ENCODE measurements at regions of chr18 and their contacts with region 1.

Region 1: GRCh38 chr18:48942554-48943261 is 8.1 kb downstream of the SMAD7 start:
- DNase-seq: peak; percentile 77 to 87
- H3K4me3 ChIP-seq: no peak overlapping the region
- H3K4me3 Mint-ChIP-seq: peak overlapping the region; percentile 37
- H3K27ac Mint-ChIP-seq: peak overlapping the region; percentile 69
- H3K4me1 ChIP-seq: peaks cover 69% of the 10 kb centered on the region
- H3K4me1 Mint-ChIP-seq: peaks cover 20% of the 10 kb centered on the region
- H3K27me3 ChIP-seq: no peaks in the 10 kb centered on the region
- H3K27me3 Mint-ChIP-seq: no peaks in the 10 kb centered on the region
- CTCF ChIP-seq: no peak

Region 2: DNA sequence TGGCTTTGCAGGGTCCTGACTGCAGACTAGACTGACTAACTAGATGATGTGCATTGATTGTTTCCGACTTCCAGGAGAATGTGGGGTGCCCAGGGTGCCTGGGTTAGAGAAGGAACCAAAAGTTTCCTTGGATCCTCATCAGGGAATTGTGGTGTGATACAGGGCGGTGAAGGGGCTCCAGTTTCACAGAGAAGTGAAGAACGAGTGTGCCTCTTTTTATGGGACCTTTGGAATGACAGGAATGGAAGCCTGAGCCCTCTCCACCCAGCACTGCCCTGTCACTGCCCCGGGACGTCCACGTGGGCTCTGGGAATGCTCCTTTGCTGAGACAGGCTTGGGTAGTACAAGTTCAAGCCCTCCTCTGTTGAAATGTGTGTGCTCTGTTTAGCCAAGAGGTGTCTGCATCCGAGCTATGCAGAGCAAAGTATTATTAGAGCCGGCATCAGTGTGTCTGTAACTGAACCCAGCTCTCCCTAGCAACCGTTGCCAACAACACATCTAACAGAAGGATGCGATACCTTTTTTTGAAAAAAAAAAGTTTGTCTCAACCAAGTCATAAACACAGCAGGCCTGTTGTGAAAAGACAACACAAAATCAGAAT is 175.5 kb before region 1 on chr18:
- CTCF ChIA-PET with region 1: no interaction called
- POLR2A ChIA-PET with region 1: no interaction called
- intact Hi-C with region 1: no loop called
- DNase-seq: peak; percentile 72 to 78
- H3K4me3 ChIP-seq: no peak overlapping the region
- H3K4me3 Mint-ChIP-seq: peak overlapping the region; percentile 52
- H3K27ac Mint-ChIP-seq: peak overlapping the region; percentile 96
- H3K4me1 ChIP-seq: peaks cover 15% of the 10 kb centered on the region
- H3K4me1 Mint-ChIP-seq: peaks cover 8% of the 10 kb centered on the region
- H3K27me3 ChIP-seq: no peaks in the 10 kb centered on the region
- H3K27me3 Mint-ChIP-seq: no peaks in the 10 kb centered on the region
- CTCF ChIP-seq: no peak

Region 3: DNA sequence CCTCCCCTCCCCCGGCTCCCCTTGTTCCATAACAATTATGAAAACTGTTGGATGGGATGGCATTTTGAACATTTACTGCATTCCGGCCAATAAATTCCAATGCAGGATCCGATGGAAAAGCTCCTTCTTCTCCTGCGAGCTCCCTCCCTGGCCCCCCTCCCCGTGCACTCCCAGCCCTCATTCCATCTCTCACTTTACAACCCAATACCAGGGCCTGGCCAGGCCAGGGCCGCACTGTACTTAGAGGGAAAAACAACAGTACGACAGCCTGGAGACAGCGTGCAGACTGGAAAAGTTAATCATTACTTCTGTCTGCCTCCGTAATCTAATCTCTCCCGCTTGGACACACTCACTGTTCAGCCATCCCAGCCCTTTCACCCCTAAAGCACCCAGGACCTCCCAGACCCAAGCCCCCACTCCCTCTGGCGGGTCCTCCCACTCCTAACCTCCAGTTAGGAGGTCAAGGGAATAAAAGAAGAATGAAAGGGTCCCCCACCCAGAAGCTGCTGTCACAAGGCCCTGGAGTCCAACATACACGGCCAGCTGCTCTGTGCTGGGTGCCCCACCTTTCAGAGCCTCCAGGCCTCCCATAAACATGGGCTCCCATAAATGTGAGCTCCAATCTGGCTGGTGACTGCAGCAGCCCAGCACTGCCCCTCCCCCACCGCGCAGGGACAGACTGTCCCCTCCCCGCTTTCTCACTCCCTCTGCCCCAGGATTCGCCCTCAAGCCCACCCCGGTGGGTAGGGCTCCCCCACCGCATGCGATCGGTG is 12.6 kb before region 1 on chr18:
- CTCF ChIA-PET with region 1: no interaction called
- POLR2A ChIA-PET with region 1: interaction called, 3 read pairs
- intact Hi-C with region 1: loop called (anchors 1 kb)
- DNase-seq: peak; percentile 78 to 90
- H3K4me3 ChIP-seq: no peak overlapping the region
- H3K4me3 Mint-ChIP-seq: peak overlapping the region; percentile 54
- H3K27ac Mint-ChIP-seq: peak overlapping the region; percentile 94
- H3K4me1 ChIP-seq: peaks cover 41% of the 10 kb centered on the region
- H3K4me1 Mint-ChIP-seq: peaks cover 33% of the 10 kb centered on the region
- H3K27me3 ChIP-seq: no peaks in the 10 kb centered on the region
- H3K27me3 Mint-ChIP-seq: no peaks in the 10 kb centered on the region
- CTCF ChIP-seq: no peak

Measured in Caco-2 (cell line).